Activated T-helper 1 cell treated with anti-CD3 and anti-CD28 coated beads, Interleukin-12 subunit alpha, Interleukin-12 subunit beta, Interleukin-2, Interleukin-4 antibody, amounts not matched to agents 30 ng/mL and 10 ng/mL and 1 ng/mL, durations not matched to agents 14 hours and 24 hours and 36 hours (primary cell): ENCODE measurements at regions of chr21 and their contacts with region 1.

Region 1: GRCh38 chr21:35051287-35051818 is 2.3 kb upstream of the RUNX1 start:
- DNase-seq: peak; percentile 72
- H3K4me3 Mint-ChIP-seq: peak overlapping the region; percentile 93
- H3K27ac Mint-ChIP-seq: peak overlapping the region; percentile 83
- H3K4me1 Mint-ChIP-seq: peaks cover 52% of the 10 kb centered on the region
- H3K27me3 Mint-ChIP-seq: no peaks in the 10 kb centered on the region

Region 2: DNA sequence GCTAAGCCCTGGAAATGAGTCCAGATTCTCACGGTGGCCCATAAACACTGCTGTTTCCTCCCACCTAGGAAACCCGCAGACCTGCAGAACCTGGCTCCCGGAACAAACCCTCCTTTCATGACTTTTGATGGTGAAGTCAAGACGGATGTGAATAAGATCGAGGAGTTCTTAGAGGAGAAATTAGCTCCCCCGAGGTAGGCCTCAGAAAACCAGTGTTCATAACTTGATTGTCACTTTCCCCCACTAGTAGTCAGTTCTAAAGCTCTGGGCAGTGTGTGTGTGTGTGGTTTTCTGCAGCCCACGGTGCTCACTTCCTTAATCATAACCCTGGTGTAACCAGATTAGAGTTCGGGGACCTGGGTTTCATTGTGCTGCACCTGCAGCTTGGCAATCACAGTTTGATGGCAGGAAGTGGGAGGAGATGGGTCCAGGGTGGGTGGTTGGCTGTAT is 343.5 kb before region 1 on chr21:
- intact Hi-C with region 1: loop called (anchors 2 kb)
- DNase-seq: peak; percentile 28
- H3K4me3 Mint-ChIP-seq: peak overlapping the region; percentile 48
- H3K27ac Mint-ChIP-seq: no peak overlapping the region
- H3K4me1 Mint-ChIP-seq: peaks cover 24% of the 10 kb centered on the region
- H3K27me3 Mint-ChIP-seq: peaks cover 16% of the 10 kb centered on the region

Region 3: DNA sequence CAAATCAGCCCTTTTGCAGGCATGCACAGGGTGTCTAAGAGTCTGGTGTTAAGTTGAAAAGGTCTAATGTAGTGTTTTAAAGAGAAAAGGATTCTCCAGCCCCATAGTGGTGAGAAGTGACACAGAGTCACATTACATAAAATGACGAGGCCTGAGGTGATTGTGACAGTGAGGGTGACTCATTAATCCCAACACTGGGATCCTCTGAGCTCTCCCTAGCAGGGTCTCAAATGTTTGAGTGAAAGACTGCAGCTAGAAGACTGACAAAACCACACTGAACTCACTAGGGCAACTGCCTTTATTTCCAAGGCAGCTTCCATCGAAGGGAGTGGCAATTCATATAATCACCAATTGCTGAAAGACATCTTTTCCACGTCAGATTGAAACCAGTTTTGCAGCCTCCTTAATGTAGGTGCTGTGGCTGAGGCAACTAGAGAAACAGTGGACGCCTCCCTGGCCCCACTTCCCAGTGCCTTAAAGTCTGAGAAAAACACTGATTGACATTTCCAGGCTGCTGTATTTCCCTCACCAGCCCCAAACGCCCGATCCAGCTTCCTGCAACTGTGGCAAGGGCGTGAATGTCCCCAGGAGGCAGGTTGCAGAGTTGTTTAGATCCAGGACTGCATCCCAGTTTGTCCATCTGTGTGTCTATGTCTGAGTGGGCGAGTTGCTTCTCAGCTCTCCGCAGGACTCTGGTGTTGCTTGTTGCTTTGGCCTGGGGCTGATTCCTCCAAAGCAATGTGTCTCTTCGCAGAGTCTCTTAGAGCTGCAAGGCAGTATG is 83.7 kb before region 1 on chr21:
- intact Hi-C with region 1: loop called (anchors 1 kb)
- DNase-seq: no peak
- H3K4me3 Mint-ChIP-seq: peak overlapping the region; percentile 80
- H3K27ac Mint-ChIP-seq: peak overlapping the region; percentile 94
- H3K4me1 Mint-ChIP-seq: peaks cover 91% of the 10 kb centered on the region
- H3K27me3 Mint-ChIP-seq: peaks cover 2% of the 10 kb centered on the region

Region 4: GRCh38 chr21:35088319-35088771 is 37.0 kb after region 1 on chr21:
- intact Hi-C with region 1: loop called (anchors 1 kb)
- DNase-seq: no peak
- H3K4me3 Mint-ChIP-seq: no peak overlapping the region
- H3K27ac Mint-ChIP-seq: peak overlapping the region; percentile 89
- H3K4me1 Mint-ChIP-seq: peaks cover 36% of the 10 kb centered on the region
- H3K27me3 Mint-ChIP-seq: no peaks in the 10 kb centered on the region

Region 5: GRCh38 chr21:35226948-35227744 is 175.8 kb after region 1 on chr21:
- intact Hi-C with region 1: loop called (anchors 1 kb)
- DNase-seq: peak; percentile 42
- H3K4me3 Mint-ChIP-seq: peak overlapping the region; percentile 27
- H3K27ac Mint-ChIP-seq: peak overlapping the region; percentile 6
- H3K4me1 Mint-ChIP-seq: peaks cover 41% of the 10 kb centered on the region
- H3K27me3 Mint-ChIP-seq: peaks cover 10% of the 10 kb centered on the region

Region 6: DNA sequence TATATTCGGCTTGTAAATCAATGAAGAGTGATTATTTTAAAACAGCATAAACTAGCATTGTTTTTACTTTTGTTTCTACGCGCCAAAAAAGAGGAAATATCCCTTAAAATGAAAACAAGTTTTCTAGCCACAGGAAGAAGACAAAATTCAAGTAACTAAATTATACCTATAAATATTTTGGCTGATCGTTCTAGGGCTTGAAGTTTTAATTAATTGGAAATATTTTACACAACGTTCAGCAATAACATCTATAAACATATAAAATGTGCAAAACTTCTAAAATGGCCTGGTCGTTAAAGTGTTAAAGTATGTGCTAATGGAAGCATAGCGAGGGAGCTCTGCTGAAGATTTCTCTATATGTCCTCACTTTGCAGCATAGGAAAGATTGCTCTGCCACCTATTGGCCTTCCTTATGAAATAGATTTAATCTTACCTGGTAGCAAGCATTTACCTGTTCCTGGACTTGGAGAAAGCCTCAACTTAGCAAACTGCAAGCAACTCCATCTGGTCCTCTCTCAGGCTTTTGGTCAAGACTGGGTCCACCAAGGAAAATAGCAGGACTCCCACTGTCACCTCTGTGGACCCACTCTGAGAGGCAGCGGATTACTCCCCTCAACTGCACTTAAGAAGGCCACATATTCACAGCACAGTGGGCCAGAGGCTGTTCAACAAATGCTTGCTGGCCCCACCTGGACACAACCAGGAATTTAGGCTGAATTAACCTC is 349.0 kb after region 1 on chr21:
- intact Hi-C with region 1: loop called (anchors 1 kb)
- DNase-seq: peak; percentile 9
- H3K4me3 Mint-ChIP-seq: no peak overlapping the region
- H3K27ac Mint-ChIP-seq: no peak overlapping the region
- H3K4me1 Mint-ChIP-seq: peaks cover 23% of the 10 kb centered on the region
- H3K27me3 Mint-ChIP-seq: no peaks in the 10 kb centered on the region

Region 7: DNA sequence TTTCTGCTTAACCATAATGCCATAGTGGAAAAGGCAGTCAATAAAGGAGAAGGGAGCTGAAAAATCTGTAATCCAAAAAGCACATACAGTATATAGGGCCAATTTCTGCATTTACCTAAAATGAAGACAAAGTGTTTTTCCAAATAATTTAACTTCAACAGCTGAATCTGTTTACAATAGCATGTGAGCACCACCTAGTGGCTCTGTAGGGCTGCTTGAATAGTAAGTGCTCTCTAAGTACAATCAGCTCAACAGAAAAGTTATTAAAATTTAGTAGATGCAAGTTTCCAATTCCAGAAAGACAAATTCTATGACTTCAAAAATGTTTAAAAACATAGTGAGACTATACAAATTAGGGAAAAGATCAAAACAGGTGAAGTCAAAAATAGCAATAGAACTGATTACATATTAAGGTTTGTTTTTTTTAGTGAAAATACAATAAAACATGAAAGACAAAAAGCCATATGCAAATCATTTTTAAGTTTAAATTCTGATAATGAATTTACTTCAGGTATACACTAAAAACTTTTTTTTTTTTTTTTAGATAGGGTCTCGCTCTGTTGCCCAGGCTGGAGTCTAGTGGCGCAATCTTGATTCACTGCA is 788.9 kb after region 1 on chr21:
- intact Hi-C with region 1: loop called (anchors 2 kb)
- DNase-seq: peak; percentile 28
- H3K4me3 Mint-ChIP-seq: no peak overlapping the region
- H3K27ac Mint-ChIP-seq: no peak overlapping the region
- H3K4me1 Mint-ChIP-seq: no peaks in the 10 kb centered on the region
- H3K27me3 Mint-ChIP-seq: peaks cover 7% of the 10 kb centered on the region